Esophagus muscularis mucosa (tissue), 4 donors: ENCODE measurements at regions of chrX and their contacts with region 1.

Region 1: GRCh38 chrX:19904778-19905367 is 17.5 kb upstream of the SH3KBP1 start:
- DNase-seq: no peak
- H3K4me3 ChIP-seq: no peak overlapping the region
- H3K27ac ChIP-seq: no peak overlapping the region
- H3K4me1 ChIP-seq: no peaks in the 10 kb centered on the region
- H3K27me3 ChIP-seq: no peaks in the 10 kb centered on the region
- CTCF ChIP-seq: peak; percentile 52 to 66 (median 59)
- EP300 ChIP-seq: no peak
- POLR2A ChIP-seq: no peak

Region 2: GRCh38 chrX:19673375-19674040 is 231.4 kb before region 1 on chrX:
- intact Hi-C with region 1: no loop called
- DNase-seq: no peak
- H3K4me3 ChIP-seq: no peak overlapping the region
- H3K27ac ChIP-seq: no peak overlapping the region
- H3K4me1 ChIP-seq: peaks cover 0 to 11% (median 4%) of the 10 kb centered on the region in 4 donors
- H3K27me3 ChIP-seq: no peaks in the 10 kb centered on the region
- CTCF ChIP-seq: no peak
- EP300 ChIP-seq: no peak
- POLR2A ChIP-seq: no peak

Region 3: GRCh38 chrX:19990556-19991349 is 85.9 kb after region 1 on chrX and contains the start of gene BCLAF3:
- intact Hi-C with region 1: loop called (anchors 5 kb)
- DNase-seq: peak; percentile 93
- H3K4me3 ChIP-seq: peak within 1 kb of the TSS; percentile 70 to 87 (median 78)
- H3K27ac ChIP-seq: peak within 1 kb of the TSS; percentile 78 to 81 (median 80)
- H3K4me1 ChIP-seq: peaks cover 0 to 12% (median 5%) of the 10 kb centered on the region in 4 donors
- H3K27me3 ChIP-seq: no peaks in the 10 kb centered on the region
- CTCF ChIP-seq: peak; percentile 81 to 87 (median 84)
- EP300 ChIP-seq: no peak
- POLR2A ChIP-seq: no peak
- total RNA-seq, gene BCLAF3: 7.0 to 10.0 (median 8.7) TPM

Region 4: GRCh38 chrX:20066968-20067708 is 162.3 kb after region 1 on chrX:
- intact Hi-C with region 1: loop called (anchors 10 kb)
- DNase-seq: no peak
- H3K4me3 ChIP-seq: no peak overlapping the region
- H3K27ac ChIP-seq: peak overlapping the region in 1 of 4 donors; percentile 47
- H3K4me1 ChIP-seq: peaks cover 6 to 14% (median 11%) of the 10 kb centered on the region in 4 donors
- H3K27me3 ChIP-seq: no peaks in the 10 kb centered on the region
- CTCF ChIP-seq: peak in 2 of 3 experiments; percentile 17 to 34
- EP300 ChIP-seq: no peak
- POLR2A ChIP-seq: no peak